Dendritic cell treated with granulocyte-macrophage colony-stimulating factor and Interleukin-4, amounts not matched to agents 40 ng/mL and 50 ng/mL, for 4 days (primary cell): ENCODE measurements at regions of chr20 and their contacts with region 1.

Region 1: GRCh38 chr20:21373436-21373835 is 23.9 kb downstream of the NKX2-4 start:
- H3K4me3 Mint-ChIP-seq: no peak overlapping the region
- H3K27ac Mint-ChIP-seq: no peak overlapping the region
- H3K4me1 Mint-ChIP-seq: no peaks in the 10 kb centered on the region
- H3K27me3 Mint-ChIP-seq: no peaks in the 10 kb centered on the region

Region 2: DNA sequence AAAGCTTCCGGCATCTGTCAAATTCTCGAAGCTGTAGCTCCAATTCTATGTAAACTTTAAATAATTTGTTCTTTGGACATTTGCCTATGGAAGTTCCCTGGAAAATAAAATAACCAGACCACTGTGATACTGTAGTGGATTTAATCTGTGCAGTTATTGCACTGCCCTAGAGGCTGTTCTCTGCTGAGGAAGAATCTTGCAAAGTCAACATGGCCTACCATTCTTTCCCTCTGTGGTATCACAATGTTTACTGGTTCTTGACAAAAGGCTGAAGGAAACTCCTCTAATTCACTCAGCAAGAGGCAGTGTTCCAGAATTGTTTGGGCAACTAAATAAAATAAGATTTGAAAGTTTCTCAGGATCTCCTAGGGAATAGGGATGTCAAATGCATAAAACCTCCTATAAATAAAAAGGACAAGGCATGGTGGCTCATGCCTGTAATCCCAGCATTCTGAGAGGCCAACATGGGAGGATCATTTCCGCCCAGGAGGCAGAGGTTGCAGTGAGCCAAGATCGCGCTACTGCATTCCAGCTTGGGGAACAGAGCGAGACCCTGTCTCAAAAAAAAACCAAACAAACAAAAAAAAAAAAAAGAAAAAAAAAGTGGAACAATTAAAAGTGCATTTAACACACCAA is 1333.6 kb before region 1 on chr20:
- intact Hi-C with region 1: loop called (anchors 10 kb)
- H3K4me3 Mint-ChIP-seq: no peak overlapping the region
- H3K27ac Mint-ChIP-seq: no peak overlapping the region
- H3K4me1 Mint-ChIP-seq: peaks cover 15% of the 10 kb centered on the region
- H3K27me3 Mint-ChIP-seq: no peaks in the 10 kb centered on the region

Region 3: DNA sequence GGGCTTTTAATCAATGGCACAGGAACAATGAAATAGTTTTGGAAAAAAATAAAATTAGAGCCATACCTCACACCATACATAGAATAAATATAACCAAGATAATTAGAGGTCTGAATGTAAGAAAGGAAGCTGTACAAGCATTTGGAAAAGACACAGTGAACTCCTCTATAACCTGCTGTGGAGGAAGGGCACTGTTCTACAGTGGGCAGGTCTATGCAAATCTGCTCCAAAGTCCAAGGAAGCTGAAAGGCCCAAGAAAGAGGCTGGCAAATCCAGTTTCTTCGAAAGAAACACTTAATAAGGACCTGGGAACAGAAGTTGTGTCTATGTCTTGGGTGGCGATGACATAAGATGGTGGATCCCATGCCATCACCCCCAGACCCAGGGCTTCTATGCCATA is 491.6 kb before region 1 on chr20:
- intact Hi-C with region 1: no loop called
- H3K4me3 Mint-ChIP-seq: no peak overlapping the region
- H3K27ac Mint-ChIP-seq: no peak overlapping the region
- H3K4me1 Mint-ChIP-seq: no peaks in the 10 kb centered on the region
- H3K27me3 Mint-ChIP-seq: peaks cover 24% of the 10 kb centered on the region